Motor neuron (in vitro differentiated cells): ENCODE measurements at regions of chr2 and their contacts with region 1.

Region 1: GRCh38 chr2:119407430-119408220 is 24.0 kb upstream of the TMEM37 start:
- ATAC-seq: peak; percentile 29 to 84 (median 60)
- H3K4me3 ChIP-seq: no peak overlapping the region
- H3K27ac ChIP-seq: no peak overlapping the region
- H3K4me1 ChIP-seq: no peaks in the 10 kb centered on the region

Region 2: GRCh38 chr2:119085613-119086012 is 322.0 kb before region 1 on chr2:
- in situ Hi-C with region 1: no loop called
- ATAC-seq: no peak
- H3K4me3 ChIP-seq: no peak overlapping the region
- H3K27ac ChIP-seq: no peak overlapping the region
- H3K4me1 ChIP-seq: peaks cover 0 to 7% of the 10 kb centered on the region in 2 donors

Region 3: DNA sequence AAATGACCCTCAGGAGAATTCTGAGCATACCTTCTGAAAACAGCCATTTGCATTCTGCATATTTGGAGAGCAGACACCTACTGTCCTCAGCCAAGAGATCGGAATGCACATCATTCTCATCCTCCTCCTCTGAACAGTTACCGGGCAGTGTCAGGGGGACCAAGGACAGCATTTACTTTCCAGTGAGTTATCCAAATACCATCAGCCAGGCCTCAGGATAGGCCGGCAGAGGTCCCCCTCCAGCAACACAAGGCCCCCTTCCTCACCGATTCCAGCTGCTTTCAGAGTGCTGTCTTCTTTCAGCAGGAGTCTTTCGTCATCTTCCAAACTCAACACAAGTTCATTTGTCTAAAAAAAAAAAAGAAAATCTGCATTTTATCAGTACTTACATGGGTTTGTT is 96.3 kb before region 1 on chr2:
- in situ Hi-C with region 1: no loop called
- ATAC-seq: peak in 2 of 8 experiments; percentile 18 to 29
- H3K4me3 ChIP-seq: no peak overlapping the region
- H3K27ac ChIP-seq: no peak overlapping the region
- H3K4me1 ChIP-seq: no peaks in the 10 kb centered on the region

Region 4: GRCh38 chr2:119476301-119477021 is 68.8 kb after region 1 on chr2:
- in situ Hi-C with region 1: loop called in 2 of 9 experiments (anchors 5 to 10 kb)
- ATAC-seq: peak; percentile 91 to 96 (median 92)
- H3K4me3 ChIP-seq: no peak overlapping the region
- H3K27ac ChIP-seq: no peak overlapping the region
- H3K4me1 ChIP-seq: no peaks in the 10 kb centered on the region

Region 5: DNA sequence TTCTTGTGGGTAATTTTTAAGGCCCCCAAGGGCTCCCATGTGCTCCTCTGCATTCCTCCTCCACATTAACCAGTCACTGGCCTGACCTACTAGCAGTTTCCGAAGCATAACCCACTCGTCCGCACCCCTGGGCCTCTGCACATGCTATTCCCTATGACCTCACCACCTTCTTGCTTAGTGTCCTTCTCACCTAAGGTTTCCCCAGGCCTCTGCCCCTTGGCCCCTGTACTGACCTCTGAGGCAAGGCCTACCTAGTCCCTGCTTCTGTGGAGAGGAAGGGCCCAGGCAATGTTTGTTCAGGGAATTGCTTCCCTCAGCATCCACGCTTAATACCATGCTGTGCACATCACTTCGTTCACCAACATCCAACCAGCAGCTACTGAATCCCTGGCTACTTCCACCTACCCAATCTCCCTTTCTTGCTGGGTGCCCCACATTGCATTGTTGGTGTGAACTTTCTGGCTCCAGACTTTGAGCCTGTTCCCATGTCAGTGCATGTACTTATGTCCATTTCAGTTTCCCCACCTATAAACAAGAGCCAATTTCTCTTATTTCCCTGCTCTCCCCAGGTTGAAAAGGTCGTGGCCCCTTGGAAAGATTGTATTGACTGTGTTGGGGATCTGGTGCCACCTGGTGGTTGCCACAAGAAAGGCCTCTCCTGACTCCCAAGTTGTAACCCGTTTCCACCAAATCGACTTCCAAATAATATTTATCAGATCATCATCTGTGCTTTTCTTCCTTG is 252.1 kb after region 1 on chr2:
- in situ Hi-C with region 1: loop called in 3 of 9 experiments (anchors 25 kb)
- ATAC-seq: peak in 3 of 8 experiments; percentile 49 to 65 (median 55)
- H3K4me3 ChIP-seq: no peak overlapping the region
- H3K27ac ChIP-seq: no peak overlapping the region
- H3K4me1 ChIP-seq: no peaks in the 10 kb centered on the region